GM12878 (cell line): ENCODE measurements at regions of chr12 and their contacts with region 1.

Region 1: GRCh38 chr12:52156736-52157565 is 34.9 kb downstream of the KRT80 start:
- DNase-seq: no peak
- ATAC-seq: peak; percentile 90
- H3K4me3 ChIP-seq: no peak overlapping the region
- H3K27ac ChIP-seq: no peak overlapping the region
- H3K4me1 ChIP-seq: no peaks in the 10 kb centered on the region
- H3K27me3 ChIP-seq: no peaks in the 10 kb centered on the region
- CTCF ChIP-seq: peak; percentile 89 to 97 (median 96); a peak in 5 of 6 replicates
- EP300 ChIP-seq: no peak
- POLR2A ChIP-seq: no peak
- RAD21 ChIP-seq: peak; percentile 95

Region 2: GRCh38 chr12:52213512-52214420 is 56.8 kb after region 1 on chr12:
- CTCF ChIA-PET with region 1: interaction called, 6 read pairs
- POLR2A ChIA-PET with region 1: no interaction called
- RAD21 ChIA-PET with region 1: no interaction called
- SMC1A ChIA-PET with region 1: interaction called, 3 read pairs
- in situ Hi-C with region 1: no loop called
- intact Hi-C with region 1: loop called (anchors 2 kb)
- DNase-seq: no peak
- ATAC-seq: peak; percentile 94
- H3K4me3 ChIP-seq: no peak overlapping the region
- H3K27ac ChIP-seq: no peak overlapping the region
- H3K4me1 ChIP-seq: no peaks in the 10 kb centered on the region
- H3K27me3 ChIP-seq: peaks cover 0 to 6% of the 10 kb centered on the region in 2 experiments; a peak in 2 of 4 replicates
- CTCF ChIP-seq: peak; percentile 82 to 94 (median 83)
- EP300 ChIP-seq: no peak
- POLR2A ChIP-seq: no peak
- RAD21 ChIP-seq: peak; percentile 56